ENCODE measurements at regions of chr19 and their contacts with region 1.

Region 1: GRCh38 chr19:13774217-13775191 is at the start of gene C19orf53:
- DNase-seq: peak; percentile 84 to 92 (median 87)
- H3K4me3 ChIP-seq: peak within 1 kb of the TSS; percentile 87 to 90
- H3K4me3 Mint-ChIP-seq: peak within 1 kb of the TSS; percentile 96 to 100 (median 100)
- H3K27ac ChIP-seq: peak within 1 kb of the TSS; percentile 84
- H3K27ac Mint-ChIP-seq: peak within 1 kb of the TSS; percentile 92 to 100 (median 98)
- H3K4me1 ChIP-seq: peaks cover 23% of the 10 kb centered on the region
- H3K4me1 Mint-ChIP-seq: peaks cover 12 to 36% (median 25%) of the 10 kb centered on the region in 4 donors
- H3K27me3 ChIP-seq: no peaks in the 10 kb centered on the region
- H3K27me3 Mint-ChIP-seq: no peaks in the 10 kb centered on the region
- total RNA-seq, gene C19orf53: 84.3 to 85.0 TPM

Region 2: GRCh38 chr19:13748169-13748828 is 26.2 kb before region 1 on chr19:
- CTCF ChIA-PET with region 1: no interaction called
- POLR2A ChIA-PET with region 1: interaction called, 28 read pairs
- intact Hi-C with region 1: no loop called
- DNase-seq: no peak
- H3K4me3 ChIP-seq: peak overlapping the region; percentile 77 to 89
- H3K4me3 Mint-ChIP-seq: peak overlapping the region; percentile 88 to 92 (median 92)
- H3K27ac ChIP-seq: peak overlapping the region; percentile 87
- H3K27ac Mint-ChIP-seq: peak overlapping the region; percentile 83 to 97 (median 96)
- H3K4me1 ChIP-seq: peaks cover 29% of the 10 kb centered on the region
- H3K4me1 Mint-ChIP-seq: peaks cover 15 to 44% (median 18%) of the 10 kb centered on the region in 4 donors
- H3K27me3 ChIP-seq: no peaks in the 10 kb centered on the region
- H3K27me3 Mint-ChIP-seq: no peaks in the 10 kb centered on the region

Region 3: DNA sequence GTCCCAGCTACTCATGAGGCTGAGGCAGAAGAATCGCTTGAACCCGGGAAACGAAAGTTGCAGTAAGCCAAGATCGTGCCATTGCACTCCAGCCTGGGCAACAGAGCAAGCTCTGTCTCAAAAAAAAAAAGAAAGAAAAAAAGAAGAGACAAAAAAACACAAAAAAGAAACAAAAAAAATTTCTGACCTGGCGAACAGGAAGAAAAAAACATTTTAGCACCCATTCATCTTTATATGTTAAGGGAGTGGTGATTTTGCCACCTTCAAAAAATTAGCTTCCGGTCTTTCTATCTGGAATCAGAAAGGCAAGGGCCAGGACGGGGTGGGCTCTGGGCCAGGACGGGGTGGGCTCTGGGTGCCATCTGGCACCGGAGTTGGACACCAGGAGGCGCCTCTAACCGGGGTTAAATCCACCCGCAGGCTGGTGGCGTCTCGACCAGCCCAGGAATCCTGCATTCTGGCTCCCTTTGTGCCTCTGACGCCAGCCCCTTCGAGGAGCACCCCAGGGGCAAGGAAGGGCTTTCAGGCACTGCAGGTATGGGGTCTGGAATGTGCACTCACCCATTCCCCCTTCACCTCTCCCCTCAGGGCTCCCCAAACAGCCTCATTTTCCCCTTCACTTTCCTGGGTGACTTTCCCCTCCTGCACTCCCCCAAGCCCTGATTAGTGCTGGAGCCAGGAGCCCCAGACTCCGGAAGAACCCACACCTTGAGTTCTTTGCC is 10.4 kb after region 1 on chr19:
- CTCF ChIA-PET with region 1: interaction called, 15 read pairs
- POLR2A ChIA-PET with region 1: interaction called, 48 read pairs
- intact Hi-C with region 1: no loop called
- DNase-seq: peak; percentile 63 to 71 (median 66)
- H3K4me3 ChIP-seq: no peak overlapping the region
- H3K4me3 Mint-ChIP-seq: peak overlapping the region in 7 of 8 donors; percentile 21 to 70 (median 64)
- H3K27ac ChIP-seq: no peak overlapping the region
- H3K27ac Mint-ChIP-seq: peak overlapping the region; percentile 12 to 91 (median 80)
- H3K4me1 ChIP-seq: peaks cover 42% of the 10 kb centered on the region
- H3K4me1 Mint-ChIP-seq: peaks cover 12 to 37% (median 24%) of the 10 kb centered on the region in 4 donors
- H3K27me3 ChIP-seq: no peaks in the 10 kb centered on the region
- H3K27me3 Mint-ChIP-seq: no peaks in the 10 kb centered on the region

Region 4: GRCh38 chr19:13825489-13826391 is 51.2 kb after region 1 on chr19:
- CTCF ChIA-PET with region 1: no interaction called
- POLR2A ChIA-PET with region 1: no interaction called
- intact Hi-C with region 1: no loop called
- DNase-seq: no peak
- H3K4me3 ChIP-seq: no peak overlapping the region
- H3K4me3 Mint-ChIP-seq: no peak overlapping the region
- H3K27ac ChIP-seq: no peak overlapping the region
- H3K27ac Mint-ChIP-seq: peak overlapping the region in 6 of 7 donors; percentile 27 to 84 (median 62)
- H3K4me1 ChIP-seq: no peaks in the 10 kb centered on the region
- H3K4me1 Mint-ChIP-seq: peaks cover 0 to 6% (median 3%) of the 10 kb centered on the region in 4 donors
- H3K27me3 ChIP-seq: no peaks in the 10 kb centered on the region
- H3K27me3 Mint-ChIP-seq: no peaks in the 10 kb centered on the region

Region 5: DNA sequence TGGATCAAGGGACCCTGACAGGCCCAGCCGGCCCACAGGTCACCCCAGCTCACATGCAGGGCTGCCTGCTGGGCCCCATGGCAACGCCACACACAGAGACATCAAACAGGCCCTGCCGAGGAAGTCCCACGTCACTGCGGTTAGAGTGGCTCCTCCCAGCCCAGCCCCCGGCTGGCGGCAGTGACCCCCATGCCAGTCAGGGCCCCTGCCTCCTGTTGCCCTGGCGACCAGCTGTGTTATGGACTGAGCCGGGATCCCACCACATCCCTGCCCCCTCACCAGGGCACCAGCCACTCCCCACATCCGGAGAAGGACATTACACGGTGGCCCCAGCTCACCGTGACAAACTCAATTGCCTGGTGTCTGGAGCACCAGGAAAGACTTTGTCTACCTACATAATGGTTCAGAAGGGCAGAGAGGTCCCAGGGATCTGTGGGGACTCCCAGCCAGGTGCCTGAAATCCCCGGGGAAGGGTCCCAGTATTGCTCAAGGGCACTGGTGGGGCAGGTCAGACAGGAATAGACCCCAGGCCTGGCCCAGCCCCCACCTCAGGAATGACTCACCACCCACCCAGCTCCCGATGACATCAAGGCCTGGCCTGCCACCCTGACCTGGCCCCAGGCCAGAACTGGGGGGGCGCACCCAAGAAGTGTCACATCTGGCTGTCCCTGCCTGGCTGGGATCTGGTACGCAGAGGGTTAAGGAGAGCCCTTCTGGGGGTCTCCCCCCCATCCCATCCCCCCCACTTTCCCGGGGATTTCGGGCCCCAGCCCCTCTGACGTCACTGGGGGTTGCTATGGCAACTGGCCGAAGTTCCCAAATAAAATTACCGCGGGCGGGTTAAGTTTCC is 72.3 kb after region 1 on chr19:
- CTCF ChIA-PET with region 1: interaction called, 7 read pairs
- POLR2A ChIA-PET with region 1: interaction called, 14 read pairs
- intact Hi-C with region 1: no loop called
- DNase-seq: peak; percentile 99
- H3K4me3 ChIP-seq: peak overlapping the region; percentile 50 to 79
- H3K4me3 Mint-ChIP-seq: peak overlapping the region; percentile 83 to 98 (median 90)
- H3K27ac ChIP-seq: peak overlapping the region; percentile 99
- H3K27ac Mint-ChIP-seq: peak overlapping the region; percentile 99 to 100 (median 100)
- H3K4me1 ChIP-seq: peaks cover 69% of the 10 kb centered on the region
- H3K4me1 Mint-ChIP-seq: peaks cover 33 to 77% (median 50%) of the 10 kb centered on the region in 4 donors
- H3K27me3 ChIP-seq: no peaks in the 10 kb centered on the region
- H3K27me3 Mint-ChIP-seq: peaks cover 0 to 4% of the 10 kb centered on the region in 2 donors